AG04450 (cell line): ENCODE measurements at regions of chr1 and their contacts with region 1.

Region 1: DNA sequence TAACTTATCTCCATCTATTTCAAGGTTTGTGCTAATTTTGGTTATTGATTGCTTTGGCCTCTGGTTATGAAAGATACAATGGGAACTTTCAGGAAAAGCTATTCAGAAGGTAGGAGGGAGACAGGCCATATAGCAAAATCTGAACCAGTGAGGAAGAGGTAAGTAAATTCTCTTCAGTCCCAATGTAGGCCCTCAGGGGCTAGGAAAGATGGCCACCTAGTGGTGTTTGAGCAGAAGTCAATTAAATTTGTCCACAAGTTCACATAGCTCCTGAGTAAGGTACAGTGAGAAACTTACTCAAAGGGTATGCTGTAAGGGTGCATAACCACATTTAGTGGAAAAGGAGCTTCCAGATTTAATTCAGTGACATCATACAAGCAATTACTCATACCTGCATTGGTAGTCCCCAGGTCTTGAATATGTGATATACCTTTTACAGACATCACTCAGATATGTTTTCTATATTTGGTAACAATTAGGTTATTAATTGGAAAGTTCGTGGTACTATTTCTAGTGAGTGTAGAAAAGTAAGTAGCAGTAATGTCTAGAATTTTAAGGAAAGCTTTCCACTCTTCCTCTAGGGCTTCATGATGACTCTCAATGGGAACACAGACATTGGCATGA is 21.4 kb upstream of the FMO1 start:
- DNase-seq: peak; percentile 60
- H3K4me3 ChIP-seq: no peak overlapping the region
- H3K27ac ChIP-seq: no peak overlapping the region
- H3K27me3 ChIP-seq: no peaks in the 10 kb centered on the region
- CTCF ChIP-seq: peak; percentile 85

Region 2: DNA sequence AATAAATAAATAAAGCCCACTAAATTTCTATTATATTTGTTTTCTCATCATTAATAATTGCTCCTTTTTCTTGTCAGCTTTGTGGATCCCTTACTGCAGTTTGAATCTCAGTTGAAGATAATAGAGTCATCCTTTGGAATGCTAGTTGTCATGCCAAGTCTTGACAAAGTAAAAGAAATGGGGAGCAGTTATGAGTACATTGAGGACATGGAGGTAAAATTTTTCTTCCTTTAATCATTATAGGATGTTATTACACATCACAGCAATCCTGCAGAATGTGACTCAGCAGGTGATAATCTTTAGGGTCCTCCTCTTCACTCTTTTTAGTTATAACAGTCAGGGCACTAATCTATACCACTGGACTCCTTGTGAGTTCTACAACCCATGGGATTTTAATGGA is 267.5 kb before region 1 on chr1:
- CTCF ChIA-PET with region 1: interaction called, 234 read pairs
- POLR2A ChIA-PET with region 1: no interaction called
- DNase-seq: no peak
- H3K4me3 ChIP-seq: no peak overlapping the region
- H3K27ac ChIP-seq: no peak overlapping the region
- H3K27me3 ChIP-seq: no peaks in the 10 kb centered on the region
- CTCF ChIP-seq: no peak

Region 3: DNA sequence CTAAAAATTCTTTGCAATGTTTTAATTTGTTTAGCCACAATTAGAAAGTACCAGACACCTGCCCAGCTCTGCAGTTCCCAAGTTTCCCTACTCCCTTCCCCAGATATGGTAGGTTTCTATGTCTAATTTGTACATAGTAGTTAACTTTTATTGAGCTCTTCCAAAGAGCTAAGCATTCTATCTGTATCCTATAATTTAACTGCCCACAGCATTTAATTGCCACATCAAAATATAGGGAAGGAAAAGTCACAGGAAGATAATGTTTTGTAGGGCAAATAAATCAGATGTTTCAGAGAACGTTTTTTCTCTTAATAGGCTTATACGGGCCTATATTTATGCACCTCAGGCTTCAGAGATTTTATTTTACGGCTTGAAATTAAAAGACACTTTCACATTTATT is 151.8 kb before region 1 on chr1:
- CTCF ChIA-PET with region 1: interaction called, 253 read pairs
- POLR2A ChIA-PET with region 1: no interaction called
- DNase-seq: no peak
- H3K4me3 ChIP-seq: no peak overlapping the region
- H3K27ac ChIP-seq: no peak overlapping the region
- H3K27me3 ChIP-seq: no peaks in the 10 kb centered on the region
- CTCF ChIP-seq: no peak

Region 4: DNA sequence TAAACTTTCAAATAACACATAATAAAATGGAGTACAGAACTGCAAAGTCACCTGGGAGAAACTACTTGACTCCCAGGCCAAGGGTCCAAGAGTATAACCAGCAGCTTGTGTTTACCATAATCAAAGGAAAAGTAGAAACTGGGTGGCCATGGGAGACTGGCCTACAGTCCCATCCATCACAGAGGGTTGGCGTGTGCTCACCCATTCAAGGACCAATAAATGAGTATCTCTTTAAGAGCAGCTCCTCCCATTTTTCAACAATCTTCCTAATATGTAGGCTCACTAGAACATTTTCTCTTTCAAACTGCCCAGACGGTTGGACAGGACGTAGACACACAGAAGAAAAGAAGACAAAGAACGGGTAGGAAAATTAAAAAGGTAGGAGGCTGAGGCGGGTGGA is 136.3 kb before region 1 on chr1 and contains the start of gene FMO3:
- CTCF ChIA-PET with region 1: interaction called, 29 read pairs
- POLR2A ChIA-PET with region 1: no interaction called
- DNase-seq: no peak
- H3K4me3 ChIP-seq: no peak within 1 kb of the TSS
- H3K27ac ChIP-seq: no peak within 1 kb of the TSS
- H3K27me3 ChIP-seq: no peaks in the 10 kb centered on the region
- CTCF ChIP-seq: no peak
- polyA plus RNA-seq, gene FMO3: 2.8 and 3.0 TPM in 2 replicates

Region 5: GRCh38 chr1:171141688-171142415 is 85.0 kb before region 1 on chr1:
- CTCF ChIA-PET with region 1: interaction called, 22 read pairs
- POLR2A ChIA-PET with region 1: no interaction called
- DNase-seq: peak; percentile 96
- H3K4me3 ChIP-seq: no peak overlapping the region
- H3K27ac ChIP-seq: peak overlapping the region; percentile 87
- H3K27me3 ChIP-seq: no peaks in the 10 kb centered on the region
- CTCF ChIP-seq: peak; percentile 63

Region 6: DNA sequence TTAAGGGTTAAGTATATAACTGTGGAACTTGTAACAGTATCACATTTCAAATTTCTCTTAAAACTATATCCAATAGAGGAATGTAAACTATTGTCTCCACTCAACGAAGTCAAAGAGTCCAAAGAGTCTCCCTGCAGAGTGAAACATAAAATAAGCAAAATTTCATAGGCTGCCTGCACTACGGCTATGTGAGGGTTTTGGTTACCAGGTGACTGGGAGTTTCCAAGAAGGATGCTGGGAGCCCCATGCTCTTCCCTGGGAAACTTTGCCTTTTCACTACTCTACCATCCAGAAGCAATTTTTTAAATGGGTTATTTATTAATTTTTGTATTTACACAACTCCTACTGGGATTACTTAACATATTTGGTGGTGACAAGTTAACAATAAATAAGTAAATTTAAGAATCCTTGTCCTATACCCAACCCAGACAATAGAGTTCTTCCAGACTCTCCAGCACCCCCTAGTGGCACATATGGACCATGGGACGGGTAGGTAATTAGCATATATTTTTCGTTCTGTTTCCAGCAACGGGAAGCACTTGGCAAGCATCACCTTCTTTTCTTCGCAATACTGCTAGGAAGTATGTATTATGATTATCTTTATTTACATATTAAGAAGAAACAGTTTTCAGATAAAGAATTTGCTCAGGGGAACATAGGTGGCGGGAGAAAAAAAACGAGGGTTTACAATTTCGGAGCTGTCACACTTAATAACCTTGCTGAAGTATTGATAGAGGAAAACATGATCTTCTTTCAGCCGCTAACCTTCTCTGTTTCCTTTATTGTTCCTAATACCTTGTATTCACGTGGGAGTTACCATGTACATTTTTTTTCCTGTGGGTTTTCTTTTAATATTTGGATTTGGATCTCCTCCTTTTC is 38.2 kb before region 1 on chr1:
- CTCF ChIA-PET with region 1: interaction called, 35 read pairs
- POLR2A ChIA-PET with region 1: no interaction called
- DNase-seq: peak; percentile 20
- H3K4me3 ChIP-seq: no peak overlapping the region
- H3K27ac ChIP-seq: no peak overlapping the region
- H3K27me3 ChIP-seq: no peaks in the 10 kb centered on the region
- CTCF ChIP-seq: peak; percentile 77

Region 7: DNA sequence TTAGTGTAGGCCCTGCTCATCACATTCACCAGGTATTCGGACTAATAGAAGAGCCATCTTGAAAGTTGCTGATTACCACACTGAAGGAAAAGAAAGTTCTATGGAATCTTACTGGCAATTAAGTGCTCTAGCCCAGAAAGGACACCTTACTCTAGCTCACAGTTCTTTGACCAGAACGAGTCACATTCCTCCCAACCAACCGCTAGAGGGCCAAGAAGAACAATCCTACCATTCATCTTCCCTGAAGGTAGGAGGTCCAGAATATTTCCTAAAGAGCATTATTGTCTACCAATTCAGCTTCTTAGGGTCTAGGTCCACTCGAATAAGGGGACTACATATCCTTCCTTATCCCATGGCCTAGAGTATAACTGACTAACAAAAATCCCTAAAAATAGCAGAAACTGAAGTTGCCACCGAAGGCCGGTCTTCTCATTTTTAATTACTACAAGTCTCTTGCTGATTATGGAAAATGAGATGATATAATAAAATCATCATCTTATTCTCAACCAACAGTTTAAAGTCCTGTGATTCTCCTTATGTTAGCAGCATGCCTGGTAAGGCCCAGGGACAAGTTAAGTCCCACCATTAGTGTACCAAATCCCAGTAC is 18.7 kb after region 1 on chr1:
- CTCF ChIA-PET with region 1: interaction called, 34 read pairs
- POLR2A ChIA-PET with region 1: no interaction called
- DNase-seq: no peak
- H3K4me3 ChIP-seq: no peak overlapping the region
- H3K27ac ChIP-seq: no peak overlapping the region
- H3K27me3 ChIP-seq: no peaks in the 10 kb centered on the region
- CTCF ChIP-seq: peak; percentile 82

Region 8: GRCh38 chr1:171550050-171550449 is 323.2 kb after region 1 on chr1:
- CTCF ChIA-PET with region 1: no interaction called
- POLR2A ChIA-PET with region 1: no interaction called
- DNase-seq: no peak
- H3K4me3 ChIP-seq: no peak overlapping the region
- H3K27ac ChIP-seq: no peak overlapping the region
- H3K27me3 ChIP-seq: no peaks in the 10 kb centered on the region
- CTCF ChIP-seq: no peak